ENCODE measurements at regions of chr15 and their contacts with region 1.

Region 1: DNA sequence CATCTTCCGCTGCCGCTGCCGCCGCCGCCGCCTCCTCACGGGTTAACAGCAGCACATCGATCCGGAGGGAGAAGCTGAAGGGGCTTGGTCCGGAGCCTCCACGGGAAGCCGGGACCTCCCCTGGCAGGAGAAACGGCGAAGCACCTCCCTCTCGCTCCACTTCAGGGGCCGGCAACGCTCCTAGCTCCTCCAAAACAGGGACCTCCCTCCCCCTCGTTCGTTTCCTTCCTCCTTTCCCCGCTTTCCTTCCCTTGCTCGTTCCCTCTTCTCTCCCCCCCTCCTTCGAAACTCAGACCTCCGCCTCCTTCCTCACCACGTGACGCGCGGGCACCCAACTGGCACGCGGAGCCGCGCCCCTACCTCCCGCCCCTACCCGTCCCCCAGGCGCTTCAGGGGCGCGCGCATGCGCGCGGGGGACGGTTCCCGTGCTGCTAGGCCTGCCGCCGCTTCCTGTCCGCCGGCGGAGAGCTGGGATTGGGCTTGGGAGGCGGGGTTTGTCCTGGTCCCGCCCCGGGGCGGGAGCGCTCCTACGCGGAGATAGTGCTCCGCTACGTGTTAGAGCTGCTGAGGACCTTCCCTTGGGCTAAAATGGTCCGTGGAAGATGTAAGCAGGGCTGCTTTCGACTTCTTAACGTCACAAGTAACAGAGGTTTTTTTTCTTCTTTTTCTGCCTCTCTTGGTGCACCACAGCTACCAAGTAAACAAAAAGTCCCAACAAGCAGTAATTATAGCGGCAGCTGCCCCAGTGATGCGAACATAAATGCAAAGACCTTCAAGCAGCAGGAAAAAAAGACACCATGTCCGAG is at the start of gene ADAM10:
- DNase-seq: peak; percentile 100
- ATAC-seq: peak; percentile 97
- total RNA-seq, gene ADAM10: 77.1 TPM

Region 2: DNA sequence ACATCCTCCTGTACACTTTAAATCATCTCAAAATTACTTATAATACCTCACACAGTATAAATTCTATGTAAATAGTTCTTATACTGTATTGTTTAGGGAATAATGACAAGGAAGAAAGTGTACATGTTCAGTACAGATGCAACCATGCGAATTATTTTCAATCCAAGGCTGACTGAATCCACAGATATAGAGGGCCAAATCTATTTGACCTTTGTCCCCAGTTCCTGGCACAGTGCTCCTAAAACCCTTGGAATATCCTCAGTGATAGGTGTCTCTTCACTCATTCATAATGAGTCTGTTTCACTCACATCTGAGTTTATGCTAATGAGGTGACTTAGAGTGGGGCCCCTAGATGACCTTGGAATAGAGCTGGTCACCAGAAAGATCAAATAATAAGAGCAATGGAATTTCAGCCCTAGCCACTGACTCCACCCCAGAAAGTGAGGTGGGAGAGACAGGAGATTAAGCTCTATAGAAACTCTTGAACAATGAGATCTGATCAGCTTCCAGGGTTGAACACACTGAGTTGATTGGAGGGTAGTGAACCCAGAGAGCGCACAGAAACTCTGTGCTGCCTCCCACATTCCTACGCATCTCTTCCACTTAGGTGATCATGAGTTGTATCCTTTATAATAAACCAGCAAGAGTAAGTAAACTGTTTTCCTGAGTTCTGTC is 65.6 kb before region 1 on chr15:
- intact Hi-C with region 1: loop called (anchors 10 kb)
- DNase-seq: no peak
- ATAC-seq: no peak

Measured in left ventricle myocardium superior (tissue), 1 donor.